MCF 10A (cell line): ENCODE measurements at regions of chr6 and their contacts with region 1.

Region 1: DNA sequence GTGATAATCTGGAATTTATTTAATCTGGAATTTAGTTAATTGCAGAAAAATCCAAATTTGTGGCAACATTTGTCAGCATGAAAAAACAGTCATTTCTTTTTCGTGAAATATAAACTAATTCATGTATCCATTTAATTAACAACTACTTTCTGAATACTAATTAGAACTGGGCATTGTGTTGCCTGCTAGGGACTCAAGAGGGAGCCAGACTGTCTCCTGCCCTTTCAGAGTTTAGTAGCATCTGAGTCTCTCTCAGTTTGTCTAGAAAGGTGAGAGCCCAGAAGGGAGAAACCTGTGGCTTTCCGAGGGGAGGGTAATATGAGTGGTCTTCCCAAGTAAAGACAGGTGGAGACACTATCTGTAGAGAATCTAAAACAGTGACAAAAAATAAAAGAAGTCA is 210.9 kb upstream of the HDDC2 start:
- DNase-seq: peak; percentile 41
- H3K4me3 Mint-ChIP-seq: no peak overlapping the region
- H3K27ac Mint-ChIP-seq: no peak overlapping the region
- H3K4me1 Mint-ChIP-seq: no peaks in the 10 kb centered on the region
- H3K27me3 Mint-ChIP-seq: peaks cover 87% of the 10 kb centered on the region
- CTCF ChIP-seq: peak; percentile 43

Region 2: GRCh38 chr6:125489579-125490285 is 22.9 kb before region 1 on chr6:
- CTCF ChIA-PET with region 1: no interaction called
- POLR2A ChIA-PET with region 1: no interaction called
- intact Hi-C with region 1: no loop called
- DNase-seq: no peak
- H3K4me3 Mint-ChIP-seq: no peak overlapping the region
- H3K27ac Mint-ChIP-seq: no peak overlapping the region
- H3K4me1 Mint-ChIP-seq: no peaks in the 10 kb centered on the region
- H3K27me3 Mint-ChIP-seq: peaks cover 75% of the 10 kb centered on the region
- CTCF ChIP-seq: no peak

Region 3: GRCh38 chr6:125688138-125688537 is 175.5 kb after region 1 on chr6:
- CTCF ChIA-PET with region 1: no interaction called
- POLR2A ChIA-PET with region 1: no interaction called
- intact Hi-C with region 1: no loop called
- DNase-seq: no peak
- H3K4me3 Mint-ChIP-seq: no peak overlapping the region
- H3K27ac Mint-ChIP-seq: no peak overlapping the region
- H3K4me1 Mint-ChIP-seq: no peaks in the 10 kb centered on the region
- H3K27me3 Mint-ChIP-seq: peaks cover 99% of the 10 kb centered on the region
- CTCF ChIP-seq: no peak

Region 4: GRCh38 chr6:125749173-125749864 is 236.7 kb after region 1 on chr6 and contains the start of gene HEY2:
- CTCF ChIA-PET with region 1: no interaction called
- POLR2A ChIA-PET with region 1: interaction called, 3 read pairs
- intact Hi-C with region 1: loop called (anchors 5 kb)
- DNase-seq: peak; percentile 88
- H3K4me3 Mint-ChIP-seq: peak within 1 kb of the TSS; percentile 73
- H3K27ac Mint-ChIP-seq: no peak within 1 kb of the TSS
- H3K4me1 Mint-ChIP-seq: peaks cover 9% of the 10 kb centered on the region
- H3K27me3 Mint-ChIP-seq: peaks cover 97% of the 10 kb centered on the region
- CTCF ChIP-seq: no peak
- total RNA-seq, gene HEY2: not detected in 2 replicates